Spleen (tissue), 13 donors: ENCODE measurements at regions of chr10 and their contacts with region 1.

Region 1: GRCh38 chr10:117174439-117175214 is 22.7 kb upstream of the KCNK18 start:
- DNase-seq: peak; percentile 90
- H3K4me3 ChIP-seq: peak overlapping the region; percentile 37 to 81 (median 50)
- H3K27ac ChIP-seq: peak overlapping the region in 2 of 8 donors; percentile 11 to 22
- H3K4me1 ChIP-seq: peaks cover 4 to 21% (median 15%) of the 10 kb centered on the region in 6 donors
- H3K27me3 ChIP-seq: peaks cover 0 to 71% (median 41%) of the 10 kb centered on the region in 7 donors
- CTCF ChIP-seq: peak; percentile 61 to 90 (median 80)
- POLR2A ChIP-seq: no peak

Region 2: DNA sequence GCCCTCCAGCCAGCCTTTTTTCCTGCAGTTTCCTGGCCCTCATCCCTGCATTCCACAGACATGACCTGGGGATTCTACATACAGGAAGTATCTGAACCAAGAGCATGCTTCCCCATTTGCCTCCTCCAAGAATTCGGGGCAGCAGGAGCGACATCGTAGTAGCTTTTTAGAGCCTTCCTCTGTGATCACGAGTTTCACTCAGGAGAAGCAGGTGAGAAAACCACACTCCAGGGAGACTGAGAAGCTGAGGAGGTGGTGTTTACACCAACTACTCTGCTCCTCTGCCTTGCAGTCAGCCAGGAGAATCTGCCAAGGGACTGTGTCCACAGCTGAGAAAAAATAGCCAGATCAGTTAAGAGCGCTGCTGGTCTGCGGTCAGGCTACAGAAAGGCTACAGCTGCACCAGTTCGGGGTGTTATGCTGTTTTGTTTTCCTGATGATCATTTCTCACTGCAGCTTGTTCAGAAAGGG is 486.4 kb before region 1 on chr10:
- intact Hi-C with region 1: loop called (anchors 10 kb)
- DNase-seq: no peak
- H3K4me3 ChIP-seq: no peak overlapping the region
- H3K27ac ChIP-seq: no peak overlapping the region
- H3K4me1 ChIP-seq: peaks cover 0 to 31% (median 2%) of the 10 kb centered on the region in 6 donors
- H3K27me3 ChIP-seq: no peaks in the 10 kb centered on the region
- CTCF ChIP-seq: no peak
- POLR2A ChIP-seq: no peak

Region 3: DNA sequence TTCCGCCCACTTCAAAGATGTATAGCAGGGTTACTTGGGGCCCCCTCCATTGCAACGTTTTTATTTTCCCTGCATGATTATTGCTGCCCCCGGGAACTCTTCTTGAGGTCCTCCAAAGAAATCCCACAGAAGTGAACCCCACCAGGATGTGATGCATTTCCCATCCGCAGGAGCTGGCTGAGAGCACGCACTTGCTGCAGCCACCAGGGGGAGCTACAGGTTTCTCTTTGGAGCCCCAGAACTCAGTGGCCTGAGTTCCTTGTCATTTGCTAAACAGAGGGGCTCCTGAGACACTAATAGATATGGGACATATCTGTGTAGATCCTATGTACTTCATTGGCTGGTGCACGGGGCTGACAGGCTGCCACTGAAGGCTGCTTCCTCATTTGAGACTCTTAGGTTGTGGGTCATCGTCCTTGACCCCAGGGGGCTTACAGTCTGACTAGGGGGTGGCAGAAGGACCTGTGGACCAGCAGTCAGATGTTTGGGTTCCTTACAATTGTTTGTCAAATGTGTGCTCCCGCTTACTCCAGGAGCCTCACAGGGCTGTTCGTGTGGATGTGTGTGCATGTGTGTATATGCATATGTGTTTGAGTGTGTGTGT is 377.6 kb before region 1 on chr10:
- intact Hi-C with region 1: loop called (anchors 2 kb)
- DNase-seq: peak; percentile 85
- H3K4me3 ChIP-seq: no peak overlapping the region
- H3K27ac ChIP-seq: no peak overlapping the region
- H3K4me1 ChIP-seq: no peaks in the 10 kb centered on the region
- H3K27me3 ChIP-seq: peaks cover 0 to 38% (median 5%) of the 10 kb centered on the region in 7 donors
- CTCF ChIP-seq: peak; percentile 55 to 91 (median 81)
- POLR2A ChIP-seq: no peak

Region 4: GRCh38 chr10:117047947-117048346 is 126.7 kb before region 1 on chr10:
- intact Hi-C with region 1: no loop called
- DNase-seq: no peak
- H3K4me3 ChIP-seq: no peak overlapping the region
- H3K27ac ChIP-seq: no peak overlapping the region
- H3K4me1 ChIP-seq: no peaks in the 10 kb centered on the region
- H3K27me3 ChIP-seq: no peaks in the 10 kb centered on the region
- CTCF ChIP-seq: no peak
- POLR2A ChIP-seq: no peak

Region 5: GRCh38 chr10:117094856-117095255 is 79.8 kb before region 1 on chr10:
- intact Hi-C with region 1: no loop called
- DNase-seq: no peak
- H3K4me3 ChIP-seq: no peak overlapping the region
- H3K27ac ChIP-seq: no peak overlapping the region
- H3K4me1 ChIP-seq: no peaks in the 10 kb centered on the region
- H3K27me3 ChIP-seq: peaks cover 0 to 6% (median 0%) of the 10 kb centered on the region in 7 donors
- CTCF ChIP-seq: no peak
- POLR2A ChIP-seq: no peak

Region 6: DNA sequence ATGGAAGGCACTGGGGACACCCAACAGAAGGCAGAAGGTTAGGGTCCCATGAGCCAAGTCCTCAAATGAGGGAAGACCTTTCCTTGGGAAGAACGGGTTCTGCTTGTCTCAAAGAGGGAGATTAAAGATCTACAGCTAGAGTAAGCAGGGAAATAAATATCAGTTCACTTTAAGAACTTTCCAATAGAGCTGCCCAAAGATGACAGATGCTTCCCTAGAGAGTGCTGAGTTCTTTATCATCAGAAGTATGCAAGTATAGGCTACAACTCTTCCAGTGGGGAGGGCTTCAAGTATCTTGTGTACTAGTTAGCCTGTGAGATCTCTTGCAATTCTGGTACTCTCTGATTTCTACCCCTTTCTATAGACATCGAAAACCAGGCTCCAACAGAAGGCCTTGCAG is 407.3 kb after region 1 on chr10:
- intact Hi-C with region 1: no loop called
- DNase-seq: no peak
- H3K4me3 ChIP-seq: no peak overlapping the region
- H3K27ac ChIP-seq: no peak overlapping the region
- H3K4me1 ChIP-seq: no peaks in the 10 kb centered on the region
- H3K27me3 ChIP-seq: peaks cover 0 to 21% (median 0%) of the 10 kb centered on the region in 7 donors
- CTCF ChIP-seq: no peak
- POLR2A ChIP-seq: no peak